ENCODE measurements at regions of chr1 and their contacts with region 1.

Region 1: DNA sequence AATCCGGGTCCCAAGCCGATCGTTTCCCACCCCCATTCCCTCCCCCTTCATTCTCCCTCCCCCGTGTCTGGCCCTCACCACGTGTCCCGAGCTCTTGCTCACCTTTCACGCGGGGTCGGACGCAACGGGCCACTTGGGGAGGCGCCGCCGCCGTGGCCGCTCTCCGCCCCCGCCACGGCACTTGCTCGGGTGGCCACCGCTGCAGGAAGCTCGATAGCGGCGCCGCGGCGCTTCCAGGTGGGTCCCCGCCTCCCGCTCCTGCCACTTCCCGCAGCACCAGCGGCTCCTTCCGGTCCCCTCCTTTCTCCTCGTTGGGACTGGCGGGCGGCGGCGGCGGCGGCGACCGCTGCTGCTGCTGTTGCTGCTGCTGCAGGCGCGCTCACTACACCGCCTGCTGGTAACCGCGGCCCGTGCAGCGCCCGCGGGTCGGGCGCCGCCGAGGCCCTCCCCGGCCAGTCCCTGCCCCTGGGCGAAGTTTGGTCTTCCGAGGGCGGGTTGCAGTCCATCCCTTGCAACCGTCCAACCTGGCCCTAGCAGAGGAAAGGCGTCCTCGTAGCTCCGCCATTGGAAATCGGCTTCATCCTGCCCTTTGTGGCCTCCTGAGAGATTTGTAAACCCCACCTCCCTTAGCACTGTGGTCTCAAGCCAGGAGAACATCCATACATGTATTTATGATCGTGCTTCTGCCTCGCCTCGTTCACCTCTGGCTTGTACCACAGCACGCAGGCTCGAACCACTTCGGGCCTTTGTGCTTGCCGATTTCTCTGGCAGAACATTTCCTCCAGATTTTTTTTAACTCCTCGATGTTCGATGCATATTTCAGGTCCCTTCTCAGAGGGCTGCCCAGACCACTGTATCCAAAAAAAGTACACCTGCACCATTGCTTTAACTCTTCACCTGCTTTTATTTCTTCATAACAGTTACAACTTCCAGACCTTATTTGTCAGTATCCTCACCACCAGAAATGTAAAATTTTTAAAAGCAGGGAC is 996 bp upstream of the ZZZ3 start:
- DNase-seq: peak; percentile 94 to 96 (median 95)
- ATAC-seq: peak; percentile 66 to 93 (median 88)
- H3K4me3 ChIP-seq: peak overlapping the region; percentile 47 to 88 (median 70)
- H3K27ac ChIP-seq: peak overlapping the region; percentile 86 to 99 (median 94)
- H3K4me1 ChIP-seq: peaks cover 0 to 43% (median 30%) of the 10 kb centered on the region in 12 donors
- H3K27me3 ChIP-seq: no peaks in the 10 kb centered on the region
- CTCF ChIP-seq: peak; percentile 83 to 98 (median 95)
- POLR2A ChIP-seq: peak in 1 of 2 donors; percentile 58

Region 2: DNA sequence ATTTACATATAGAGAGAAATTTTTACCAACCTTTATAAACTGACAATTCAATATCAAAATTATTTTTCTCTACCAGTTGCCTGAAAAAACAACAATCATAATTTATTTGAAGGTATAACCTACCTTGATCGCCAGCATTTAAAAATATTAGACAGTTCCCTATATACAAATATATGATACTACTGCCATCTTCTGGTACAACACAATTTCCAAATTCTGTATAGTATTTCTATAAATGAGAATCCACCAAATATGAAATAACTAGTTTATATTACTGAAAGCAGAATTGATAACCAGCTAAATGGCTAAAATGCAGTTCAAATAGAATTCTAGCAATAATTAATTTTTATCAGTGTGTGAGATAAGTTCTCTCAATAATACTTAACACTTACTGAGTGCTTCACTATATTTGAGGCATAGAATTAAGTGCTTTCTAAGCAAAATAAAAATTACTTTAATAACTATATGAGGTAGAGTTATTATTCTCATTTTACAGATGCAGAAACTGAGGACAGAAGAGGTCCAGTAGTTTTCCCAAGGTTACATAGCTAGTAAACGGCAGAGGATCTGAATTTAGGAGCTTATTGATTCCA is 539.8 kb before region 1 on chr1:
- intact Hi-C with region 1: loop called in 5 of 10 experiments (anchors 2 to 10 kb)
- DNase-seq: no peak
- ATAC-seq: no peak
- H3K4me3 ChIP-seq: no peak overlapping the region
- H3K27ac ChIP-seq: no peak overlapping the region
- H3K4me1 ChIP-seq: no peaks in the 10 kb centered on the region
- H3K27me3 ChIP-seq: no peaks in the 10 kb centered on the region
- CTCF ChIP-seq: peak in 9 of 12 donors; percentile 14 to 46 (median 31)
- POLR2A ChIP-seq: no peak

Region 3: GRCh38 chr1:77219166-77219887 is 464.1 kb before region 1 on chr1 and contains the start of gene PIGK:
- intact Hi-C with region 1: loop called in 1 of 10 experiments (anchors 2 kb)
- DNase-seq: peak; percentile 84 to 92 (median 91)
- ATAC-seq: peak; percentile 97 to 99 (median 98)
- H3K4me3 ChIP-seq: peak within 1 kb of the TSS; percentile 48 to 89 (median 73)
- H3K27ac ChIP-seq: peak within 1 kb of the TSS; percentile 11 to 90 (median 81)
- H3K4me1 ChIP-seq: peaks cover 0 to 15% (median 10%) of the 10 kb centered on the region in 12 donors
- H3K27me3 ChIP-seq: no peaks in the 10 kb centered on the region
- CTCF ChIP-seq: peak in 1 of 12 donors; percentile 16
- POLR2A ChIP-seq: no peak
- total RNA-seq, gene PIGK: 24.3 to 42.4 (median 28.3) TPM

Region 4: GRCh38 chr1:77545970-77546369 is 137.5 kb before region 1 on chr1:
- intact Hi-C with region 1: loop called in 2 of 10 experiments (anchors 5 to 10 kb)
- DNase-seq: no peak
- ATAC-seq: no peak
- H3K4me3 ChIP-seq: no peak overlapping the region
- H3K27ac ChIP-seq: no peak overlapping the region
- H3K4me1 ChIP-seq: peaks cover 0 to 14% (median 0%) of the 10 kb centered on the region in 12 donors
- H3K27me3 ChIP-seq: no peaks in the 10 kb centered on the region
- CTCF ChIP-seq: no peak
- POLR2A ChIP-seq: no peak

Region 5: DNA sequence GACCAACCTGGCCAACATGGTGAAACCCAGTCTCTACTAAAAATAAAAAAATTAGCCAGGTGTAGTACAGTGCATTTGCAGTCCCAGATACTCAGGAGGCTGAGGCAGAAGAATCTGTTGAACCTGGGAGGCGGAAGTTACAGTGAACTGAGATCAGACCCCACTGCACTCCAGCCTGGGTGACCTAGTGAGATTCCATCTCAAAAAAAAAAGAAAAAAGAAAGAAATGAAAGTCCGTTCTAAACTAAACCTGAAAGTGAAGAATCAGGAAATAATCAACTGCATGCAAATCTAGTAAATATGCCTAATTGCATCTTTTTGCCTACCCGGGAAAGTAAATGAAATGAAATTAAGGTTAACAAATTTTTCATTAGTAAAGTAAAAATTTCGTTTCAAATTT is 100.5 kb before region 1 on chr1:
- intact Hi-C with region 1: loop called in 1 of 10 experiments (anchors 10 kb)
- DNase-seq: no peak
- ATAC-seq: no peak
- H3K4me3 ChIP-seq: no peak overlapping the region
- H3K27ac ChIP-seq: no peak overlapping the region
- H3K4me1 ChIP-seq: peaks cover 0 to 3% (median 0%) of the 10 kb centered on the region in 12 donors
- H3K27me3 ChIP-seq: no peaks in the 10 kb centered on the region
- CTCF ChIP-seq: no peak
- POLR2A ChIP-seq: no peak